Panc1 (cell line): ENCODE measurements at regions of chr1 and their contacts with region 1.

Region 1: DNA sequence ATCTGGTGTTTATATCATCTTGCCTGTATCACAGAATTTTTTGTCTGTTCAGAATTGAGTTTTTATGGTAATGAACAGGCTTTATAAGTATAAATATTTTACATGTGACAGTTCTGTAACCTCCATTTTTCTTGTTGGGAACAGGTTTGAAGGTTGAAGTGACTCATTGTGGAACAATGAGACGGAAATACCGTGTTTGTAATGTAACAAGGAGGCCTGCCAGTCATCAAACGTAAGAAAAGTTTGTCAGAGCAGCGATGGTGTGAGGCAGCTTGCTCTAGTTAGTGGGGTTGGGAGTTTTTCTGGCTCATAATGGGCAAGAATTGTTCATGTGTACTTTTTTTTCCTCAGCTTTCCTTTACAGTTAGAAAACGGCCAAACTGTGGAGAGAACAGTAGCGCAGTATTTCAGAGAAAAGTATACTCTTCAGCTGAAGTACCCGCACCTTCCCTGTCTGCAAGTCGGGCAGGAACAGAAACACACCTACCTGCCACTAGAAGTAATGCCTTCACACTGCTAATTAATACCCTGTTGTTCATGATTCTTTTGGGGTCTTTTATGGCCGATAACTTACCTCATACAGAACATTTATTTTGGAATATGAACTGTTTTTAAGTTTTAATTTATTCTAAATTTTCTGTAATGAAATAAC is 75.2 kb upstream of the TEKT2 start:
- DNase-seq: peak; percentile 39
- ATAC-seq: peak; percentile 87
- H3K4me3 ChIP-seq: no peak overlapping the region
- H3K27ac ChIP-seq: peak overlapping the region; percentile 44; the same call in 1 of the 2 replicates
- H3K4me1 ChIP-seq: peaks cover 9% of the 10 kb centered on the region
- H3K27me3 ChIP-seq: no peaks in the 10 kb centered on the region
- CTCF ChIP-seq: no peak

Region 2: DNA sequence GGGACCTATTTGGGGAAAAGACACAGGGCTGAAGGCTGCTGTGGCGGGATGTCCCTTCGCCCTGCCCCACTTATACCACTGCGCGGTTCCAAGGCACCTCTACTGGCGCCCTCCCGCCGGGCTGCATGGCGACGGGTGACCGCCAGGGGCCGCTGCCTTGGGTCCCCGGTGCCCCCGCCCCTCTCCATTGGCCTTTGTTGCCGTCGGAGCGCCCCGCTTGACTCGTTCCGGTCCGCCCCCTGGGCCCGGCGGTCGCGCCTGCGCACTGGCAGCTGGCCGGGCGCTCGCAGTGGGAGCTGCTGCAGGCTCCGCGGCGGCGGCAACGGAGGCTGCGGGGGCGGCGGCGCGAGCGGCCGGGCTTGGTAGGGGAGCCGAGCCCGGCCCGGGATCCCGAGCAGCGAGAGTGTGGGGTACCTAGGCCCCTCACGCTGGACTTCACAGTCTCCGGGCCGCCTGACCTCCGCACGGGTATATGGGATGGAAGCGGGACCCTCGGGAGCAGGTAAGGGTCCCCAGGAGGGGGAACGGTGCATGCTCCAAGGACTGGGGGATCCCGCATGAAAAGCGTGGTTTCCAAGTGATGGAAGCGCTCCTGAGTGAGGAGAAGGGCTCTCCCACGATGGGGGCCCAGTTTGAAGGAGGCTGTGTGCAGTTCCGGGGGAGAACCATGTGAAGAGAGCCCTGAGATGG is 125.6 kb before region 1 on chr1 and contains the start of gene AGO1:
- CTCF ChIA-PET with region 1: no interaction called
- POLR2A ChIA-PET with region 1: no interaction called
- in situ Hi-C with region 1: no loop called
- intact Hi-C with region 1: no loop called
- DNase-seq: peak; percentile 47
- ATAC-seq: peak; percentile 95
- H3K4me3 ChIP-seq: peak within 1 kb of the TSS; percentile 93 to 96
- H3K27ac ChIP-seq: peak within 1 kb of the TSS; percentile 73
- H3K4me1 ChIP-seq: peaks cover 17% of the 10 kb centered on the region
- H3K27me3 ChIP-seq: no peaks in the 10 kb centered on the region
- CTCF ChIP-seq: peak; percentile 99
- total RNA-seq, gene AGO1: 40.1 TPM

Region 3: GRCh38 chr1:36023098-36023769 is 14.6 kb after region 1 on chr1:
- CTCF ChIA-PET with region 1: no interaction called
- POLR2A ChIA-PET with region 1: interaction called, 10 read pairs
- in situ Hi-C with region 1: no loop called
- intact Hi-C with region 1: no loop called
- DNase-seq: no peak
- ATAC-seq: no peak
- H3K4me3 ChIP-seq: no peak overlapping the region
- H3K27ac ChIP-seq: no peak overlapping the region
- H3K4me1 ChIP-seq: no peaks in the 10 kb centered on the region
- H3K27me3 ChIP-seq: no peaks in the 10 kb centered on the region
- CTCF ChIP-seq: no peak

Region 4: DNA sequence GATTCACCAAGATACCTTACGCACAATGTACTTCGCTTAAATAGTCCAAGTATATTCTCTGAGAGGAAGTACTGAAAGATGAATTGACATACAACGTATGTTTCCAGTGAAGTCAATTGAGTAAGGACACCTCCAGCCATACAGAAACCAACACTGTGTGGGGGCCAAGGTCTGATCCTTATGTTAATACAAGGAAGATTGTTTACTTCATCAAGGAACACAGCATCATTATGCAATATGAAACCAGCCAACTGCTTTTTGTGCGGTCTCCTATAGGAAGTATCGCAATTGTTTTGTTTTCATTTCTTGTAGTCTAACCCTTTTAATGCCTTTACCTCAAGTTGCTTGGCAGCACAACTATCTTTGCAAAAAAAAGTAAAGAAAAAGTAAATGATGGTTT is 47.0 kb after region 1 on chr1:
- CTCF ChIA-PET with region 1: no interaction called
- POLR2A ChIA-PET with region 1: interaction called, 10 read pairs
- in situ Hi-C with region 1: no loop called
- intact Hi-C with region 1: no loop called
- DNase-seq: no peak
- ATAC-seq: no peak
- H3K4me3 ChIP-seq: no peak overlapping the region
- H3K27ac ChIP-seq: no peak overlapping the region
- H3K4me1 ChIP-seq: no peaks in the 10 kb centered on the region
- H3K27me3 ChIP-seq: no peaks in the 10 kb centered on the region
- CTCF ChIP-seq: no peak

Region 5: DNA sequence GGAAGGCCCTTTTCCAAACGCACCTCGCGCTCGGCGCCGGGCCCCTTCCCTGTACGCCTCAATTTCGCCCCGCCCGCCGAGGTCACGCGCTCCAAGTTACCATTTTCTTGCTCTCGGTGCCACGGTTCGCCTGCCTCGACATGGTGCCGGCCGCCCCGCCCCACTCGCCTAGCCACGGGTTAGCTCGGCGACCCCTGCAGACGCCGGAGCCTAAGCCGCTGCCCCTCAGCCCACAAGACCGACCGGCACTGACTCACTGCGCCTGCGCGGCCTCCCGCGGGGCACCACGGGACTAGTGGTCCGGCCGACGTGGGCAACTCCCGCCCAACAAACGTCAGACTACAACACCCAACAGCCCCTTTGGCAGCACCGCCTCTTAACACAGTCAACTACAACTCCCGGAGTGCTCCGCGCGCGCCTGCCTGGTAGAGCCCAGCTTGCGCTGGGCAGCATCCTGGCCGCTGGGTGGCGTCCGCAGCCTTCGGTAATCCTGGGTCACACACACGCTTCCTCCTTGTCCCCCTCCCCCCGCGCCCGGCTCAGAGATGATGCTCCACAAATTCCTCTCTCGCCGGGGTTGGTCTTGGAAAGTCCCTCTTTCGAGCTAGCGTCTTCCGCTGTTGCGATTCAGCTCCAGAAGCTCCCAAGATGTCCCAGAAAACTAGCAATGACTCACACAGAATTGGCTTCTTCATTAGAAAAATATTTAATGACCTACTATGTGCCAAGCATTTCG is 140.7 kb after region 1 on chr1 and contains the start of gene TRAPPC3:
- CTCF ChIA-PET with region 1: no interaction called
- POLR2A ChIA-PET with region 1: no interaction called
- in situ Hi-C with region 1: no loop called
- intact Hi-C with region 1: no loop called
- DNase-seq: peak; percentile 98
- ATAC-seq: peak; percentile 93
- H3K4me3 ChIP-seq: peak within 1 kb of the TSS; percentile 89 to 98
- H3K27ac ChIP-seq: peak within 1 kb of the TSS; percentile 98
- H3K4me1 ChIP-seq: peaks cover 33% of the 10 kb centered on the region
- H3K27me3 ChIP-seq: no peaks in the 10 kb centered on the region
- CTCF ChIP-seq: peak; percentile 98
- total RNA-seq, gene TRAPPC3: 98.7 TPM